ENCODE measurements at regions of chr3 and their contacts with region 1.

Region 1: DNA sequence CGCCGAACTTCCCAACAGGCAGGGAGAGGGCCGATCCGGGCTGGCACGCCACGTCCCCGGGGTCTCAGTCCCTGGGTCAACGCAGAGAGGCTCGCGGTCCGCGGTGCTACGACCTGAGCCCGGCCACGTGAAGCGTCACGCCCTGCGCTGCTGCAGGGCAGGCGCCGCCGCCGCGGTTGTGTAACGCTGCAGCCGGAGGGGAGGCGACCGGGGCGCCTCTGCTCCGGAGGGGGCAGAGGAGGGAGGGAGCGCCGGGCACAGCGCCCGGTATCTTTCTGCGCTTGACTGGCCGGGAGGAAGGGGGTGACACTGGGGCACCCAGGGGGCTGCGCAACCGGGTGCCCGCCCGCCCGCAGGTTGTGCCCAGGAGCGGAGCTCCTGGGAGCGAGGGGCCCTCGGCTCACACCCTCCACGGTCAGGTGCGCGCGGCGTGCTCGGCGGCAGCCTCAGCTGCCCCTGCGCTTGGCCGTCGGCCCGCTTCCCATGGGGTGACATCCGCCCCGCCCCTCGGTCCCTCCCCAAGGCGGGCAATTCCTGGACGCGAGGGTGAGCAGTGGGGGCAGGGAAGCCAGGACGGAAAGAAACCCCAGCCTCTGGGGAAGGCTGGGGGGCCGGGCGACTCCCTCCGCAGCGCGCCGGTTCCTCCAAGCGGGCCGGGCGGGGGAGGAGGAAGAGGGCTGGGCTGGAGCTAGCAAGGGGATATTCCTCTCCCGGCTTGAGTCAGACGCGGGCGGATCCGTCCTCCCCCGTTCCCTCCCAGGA is 852 bp upstream of the BHLHE40 start:
- DNase-seq: peak; percentile 54 to 83 (median 79)
- H3K4me3 ChIP-seq: peak overlapping the region; percentile 75
- H3K4me3 Mint-ChIP-seq: peak overlapping the region; percentile 97 to 100 (median 99)
- H3K27ac ChIP-seq: peak overlapping the region; percentile 100
- H3K27ac Mint-ChIP-seq: peak overlapping the region; percentile 98 to 100 (median 100)
- H3K4me1 ChIP-seq: peaks cover 43% of the 10 kb centered on the region
- H3K4me1 Mint-ChIP-seq: peaks cover 53 to 66% (median 60%) of the 10 kb centered on the region in 3 donors
- H3K27me3 ChIP-seq: no peaks in the 10 kb centered on the region
- H3K27me3 Mint-ChIP-seq: peaks cover 0 to under 1% of the 10 kb centered on the region in 2 donors

Region 2: DNA sequence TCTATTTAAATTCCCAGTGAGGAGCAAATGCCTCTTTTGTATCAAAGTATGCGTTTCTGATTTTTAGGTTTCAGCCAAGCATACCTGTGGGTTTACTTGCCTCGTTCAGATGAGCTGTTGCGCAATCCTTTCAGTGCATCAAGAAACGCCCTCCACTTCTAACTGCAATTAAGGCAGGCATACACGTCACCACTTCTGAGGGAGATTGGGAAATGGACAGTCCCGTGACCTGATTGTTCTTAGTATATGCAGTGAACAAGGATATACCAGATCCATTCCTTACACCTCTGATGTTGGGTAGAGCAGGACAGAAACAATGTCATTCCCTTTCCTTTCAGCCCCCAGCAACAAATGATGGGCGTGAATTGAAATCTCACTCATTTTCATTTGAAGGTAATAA is 266.2 kb before region 1 on chr3:
- CTCF ChIA-PET with region 1: interaction called, 25 read pairs
- POLR2A ChIA-PET with region 1: no interaction called
- DNase-seq: no peak
- H3K4me3 ChIP-seq: no peak overlapping the region
- H3K4me3 Mint-ChIP-seq: no peak overlapping the region
- H3K27ac ChIP-seq: no peak overlapping the region
- H3K27ac Mint-ChIP-seq: no peak overlapping the region
- H3K4me1 ChIP-seq: no peaks in the 10 kb centered on the region
- H3K4me1 Mint-ChIP-seq: no peaks in the 10 kb centered on the region
- H3K27me3 ChIP-seq: no peaks in the 10 kb centered on the region
- H3K27me3 Mint-ChIP-seq: no peaks in the 10 kb centered on the region

Region 3: DNA sequence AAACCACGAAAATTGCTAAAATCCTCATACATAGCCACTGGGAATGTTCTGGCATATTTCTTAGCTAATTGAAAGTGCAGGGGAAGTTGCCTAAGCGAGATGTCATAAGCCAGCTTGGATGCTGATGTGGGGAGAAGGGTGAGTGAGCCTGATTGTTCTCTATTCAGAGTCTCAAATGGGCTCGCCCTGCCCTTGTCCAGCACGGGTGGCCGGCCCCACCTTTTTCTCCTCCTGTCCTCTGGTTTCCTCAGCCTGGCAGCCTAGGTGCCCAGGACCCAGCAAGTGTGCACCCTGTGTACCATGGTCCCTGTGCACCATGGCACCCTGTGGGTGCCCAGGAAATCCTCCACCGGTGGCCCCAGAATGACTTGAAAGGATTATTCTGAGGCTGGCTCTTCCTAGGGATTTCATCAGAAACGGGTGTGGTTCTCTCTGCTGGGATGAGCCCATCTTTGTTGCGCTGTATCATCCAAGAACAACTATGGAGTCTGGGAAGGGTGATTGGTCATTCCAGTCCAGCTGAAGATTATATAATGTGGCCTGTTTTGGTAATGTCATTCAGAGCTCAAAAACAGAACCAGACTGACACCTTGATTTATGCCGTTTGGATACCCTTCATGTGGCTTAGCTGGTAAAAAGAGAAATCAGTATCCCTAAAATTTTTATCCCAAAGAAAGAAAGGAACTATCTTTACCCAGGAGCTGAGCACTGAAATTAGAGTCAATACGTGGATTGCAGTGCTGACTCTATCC is 149.9 kb before region 1 on chr3:
- CTCF ChIA-PET with region 1: interaction called, 26 read pairs
- POLR2A ChIA-PET with region 1: interaction called, 7 read pairs
- DNase-seq: no peak
- H3K4me3 ChIP-seq: no peak overlapping the region
- H3K4me3 Mint-ChIP-seq: peak overlapping the region in 1 of 7 donors; percentile 55
- H3K27ac ChIP-seq: no peak overlapping the region
- H3K27ac Mint-ChIP-seq: peak overlapping the region in 4 of 8 donors; percentile 68 to 90 (median 76)
- H3K4me1 ChIP-seq: peaks cover 96% of the 10 kb centered on the region
- H3K4me1 Mint-ChIP-seq: peaks cover 79 to 95% (median 92%) of the 10 kb centered on the region in 3 donors
- H3K27me3 ChIP-seq: no peaks in the 10 kb centered on the region
- H3K27me3 Mint-ChIP-seq: peaks cover 0 to 7% of the 10 kb centered on the region in 2 donors

Region 4: GRCh38 chr3:4866841-4867240 is 111.5 kb before region 1 on chr3:
- CTCF ChIA-PET with region 1: interaction called, 14 read pairs
- POLR2A ChIA-PET with region 1: interaction called, 3 read pairs
- DNase-seq: no peak
- H3K4me3 ChIP-seq: peak overlapping the region; percentile 79
- H3K4me3 Mint-ChIP-seq: peak overlapping the region; percentile 38 to 87 (median 84)
- H3K27ac ChIP-seq: peak overlapping the region; percentile 93
- H3K27ac Mint-ChIP-seq: peak overlapping the region; percentile 81 to 99 (median 95)
- H3K4me1 ChIP-seq: peaks cover 25% of the 10 kb centered on the region
- H3K4me1 Mint-ChIP-seq: peaks cover 28 to 36% (median 31%) of the 10 kb centered on the region in 3 donors
- H3K27me3 ChIP-seq: no peaks in the 10 kb centered on the region
- H3K27me3 Mint-ChIP-seq: peaks cover 0 to 4% of the 10 kb centered on the region in 2 donors

Region 5: GRCh38 chr3:5016218-5017161 is 38.1 kb after region 1 on chr3:
- CTCF ChIA-PET with region 1: interaction called, 17 read pairs
- POLR2A ChIA-PET with region 1: interaction called, 10 read pairs
- DNase-seq: peak in 4 of 5 donors; percentile 14 to 62 (median 35)
- H3K4me3 ChIP-seq: no peak overlapping the region
- H3K4me3 Mint-ChIP-seq: peak overlapping the region in 4 of 7 donors; percentile 5 to 49 (median 30)
- H3K27ac ChIP-seq: peak overlapping the region; percentile 63
- H3K27ac Mint-ChIP-seq: peak overlapping the region; percentile 40 to 96 (median 92)
- H3K4me1 ChIP-seq: peaks cover 55% of the 10 kb centered on the region
- H3K4me1 Mint-ChIP-seq: peaks cover 49 to 72% (median 61%) of the 10 kb centered on the region in 3 donors
- H3K27me3 ChIP-seq: no peaks in the 10 kb centered on the region
- H3K27me3 Mint-ChIP-seq: no peaks in the 10 kb centered on the region

Region 6: GRCh38 chr3:5136211-5136918 is 158.0 kb after region 1 on chr3:
- CTCF ChIA-PET with region 1: no interaction called
- POLR2A ChIA-PET with region 1: no interaction called
- DNase-seq: peak in 3 of 5 donors; percentile 45 to 51 (median 51)
- H3K4me3 ChIP-seq: no peak overlapping the region
- H3K4me3 Mint-ChIP-seq: no peak overlapping the region
- H3K27ac ChIP-seq: peak overlapping the region; percentile 8
- H3K27ac Mint-ChIP-seq: peak overlapping the region; percentile 3 to 84 (median 48)
- H3K4me1 ChIP-seq: peaks cover 39% of the 10 kb centered on the region
- H3K4me1 Mint-ChIP-seq: peaks cover 65 to 83% (median 74%) of the 10 kb centered on the region in 3 donors
- H3K27me3 ChIP-seq: no peaks in the 10 kb centered on the region
- H3K27me3 Mint-ChIP-seq: no peaks in the 10 kb centered on the region